H1 (cell line): ENCODE measurements at regions of chr5 and their contacts with region 1.

Region 1: DNA sequence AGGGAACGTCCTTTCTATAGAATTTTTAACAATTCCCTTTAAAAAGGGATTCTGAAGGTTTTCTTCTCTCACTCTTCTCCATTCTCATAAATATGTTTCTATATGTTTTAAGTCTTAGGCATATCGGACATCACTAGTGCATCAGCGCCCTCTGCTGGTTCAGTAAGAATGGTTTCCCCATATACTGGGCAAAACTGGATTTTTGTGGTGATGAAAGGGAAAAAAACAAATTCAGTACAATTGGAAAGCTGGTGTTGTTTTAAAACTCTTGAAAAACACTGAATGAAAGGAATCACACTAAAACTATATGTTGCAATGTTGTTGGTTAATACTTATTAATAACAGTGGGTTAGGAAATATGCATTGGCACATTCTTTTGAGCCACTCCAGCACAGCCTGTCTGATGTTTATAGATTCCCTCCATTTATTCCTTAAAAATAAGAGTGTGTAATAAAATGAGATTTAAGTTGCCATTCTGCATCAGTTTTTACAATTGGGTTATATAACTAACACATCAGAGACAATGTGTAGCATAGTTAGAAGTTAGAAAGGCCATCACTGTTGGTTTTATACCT is 15.8 kb downstream of the CWC27 start:
- DNase-seq: peak in 1 of 2 experiments; percentile 72
- H3K4me3 ChIP-seq: no peak overlapping the region
- H3K27ac ChIP-seq: no peak overlapping the region
- H3K4me1 ChIP-seq: no peaks in the 10 kb centered on the region
- H3K27me3 ChIP-seq: no peaks in the 10 kb centered on the region
- CTCF ChIP-seq: peak in 2 of 3 experiments; percentile 69 to 79; a peak in 3 of 4 replicates
- EP300 ChIP-seq: no peak
- POLR2A ChIP-seq: no peak
- RAD21 ChIP-seq: peak; percentile 88 to 89

Region 2: GRCh38 chr5:64707191-64707590 is 77.3 kb before region 1 on chr5:
- CTCF ChIA-PET with region 1: no interaction called
- POLR2A ChIA-PET with region 1: no interaction called
- DNase-seq: no peak
- H3K4me3 ChIP-seq: no peak overlapping the region
- H3K27ac ChIP-seq: no peak overlapping the region
- H3K4me1 ChIP-seq: peaks cover 0 to 5% (median under 1%) of the 10 kb centered on the region in 4 experiments; a peak in 4 of 7 replicates
- H3K27me3 ChIP-seq: no peaks in the 10 kb centered on the region
- CTCF ChIP-seq: no peak
- EP300 ChIP-seq: no peak
- POLR2A ChIP-seq: no peak
- RAD21 ChIP-seq: no peak

Region 3: GRCh38 chr5:64768358-64769312 is 15.9 kb before region 1 on chr5 and contains the starts of genes CWC27 and SREK1IP1:
- CTCF ChIA-PET with region 1: interaction called, 12 read pairs
- POLR2A ChIA-PET with region 1: interaction called, 17 read pairs
- DNase-seq: peak; percentile 69 to 85
- H3K4me3 ChIP-seq: peak within 1 kb of the TSS; percentile 79 to 100 (median 98)
- H3K27ac ChIP-seq: peak within 1 kb of the TSS; percentile 97
- H3K4me1 ChIP-seq: peaks cover 0 to 9% (median 3%) of the 10 kb centered on the region in 4 experiments; a peak in 4 of 7 replicates
- H3K27me3 ChIP-seq: no peaks in the 10 kb centered on the region
- CTCF ChIP-seq: peak in 1 of 3 experiments; percentile 6; a peak in 1 of 4 replicates
- EP300 ChIP-seq: peak in 1 of 2 experiments; percentile 95; a peak in 2 of 3 replicates
- POLR2A ChIP-seq: peak; percentile 85 to 95
- RAD21 ChIP-seq: peak; percentile 15 to 28; a peak in 2 of 4 replicates
- total RNA-seq, gene CWC27: 41.1 and 43.4 TPM in 2 replicates
- total RNA-seq, gene SREK1IP1: 37.2 and 39.0 TPM in 2 replicates